PC-9 (cell line): ENCODE measurements at regions of chr12 and their contacts with region 1.

Region 1: DNA sequence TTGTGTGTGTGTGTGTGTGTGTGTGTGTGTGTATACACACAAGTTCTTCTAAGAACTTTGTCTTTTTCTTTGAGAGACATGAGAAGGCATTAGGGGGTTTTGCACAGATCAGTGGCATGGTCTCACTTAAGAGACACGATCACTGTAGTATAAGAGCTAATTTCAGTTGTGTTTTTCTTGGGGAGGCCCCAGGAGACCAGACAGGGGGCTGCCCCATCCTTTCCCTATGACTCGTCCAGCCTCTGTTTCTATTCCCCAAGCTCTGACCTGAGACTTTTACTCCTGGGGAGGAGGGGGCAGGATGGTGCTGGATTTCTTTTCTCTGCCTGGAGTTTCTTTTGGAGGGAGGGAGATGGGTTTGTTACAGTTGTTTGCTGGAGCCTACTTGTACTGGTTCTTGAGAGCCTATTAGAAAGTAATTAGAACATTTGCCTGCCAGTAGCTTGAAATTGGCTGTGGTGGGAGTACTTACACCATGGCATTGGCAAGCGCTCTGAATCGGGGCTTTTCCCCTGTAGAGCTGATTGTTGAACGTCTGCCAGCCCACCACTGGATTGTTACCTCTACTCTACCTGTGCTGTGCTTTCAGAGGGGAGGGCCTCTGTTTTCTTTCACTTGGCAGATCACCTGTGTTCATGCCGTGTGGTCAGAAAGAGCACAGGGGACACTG is 109.5 kb downstream of the TSPAN9 start:
- DNase-seq: no peak
- H3K4me3 ChIP-seq: no peak overlapping the region
- H3K27ac ChIP-seq: no peak overlapping the region
- H3K4me1 ChIP-seq: no peaks in the 10 kb centered on the region
- H3K27me3 ChIP-seq: no peaks in the 10 kb centered on the region
- CTCF ChIP-seq: no peak

Region 2: GRCh38 chr12:2853626-2854025 is 333.1 kb before region 1 on chr12:
- CTCF ChIA-PET with region 1: no interaction called
- POLR2A ChIA-PET with region 1: interaction called, 24 read pairs
- intact Hi-C with region 1: no loop called
- DNase-seq: peak in 1 of 2 experiments; percentile 79
- H3K4me3 ChIP-seq: no peak overlapping the region
- H3K27ac ChIP-seq: no peak overlapping the region
- H3K4me1 ChIP-seq: no peaks in the 10 kb centered on the region
- H3K27me3 ChIP-seq: no peaks in the 10 kb centered on the region
- CTCF ChIP-seq: peak; percentile 80

Region 3: GRCh38 chr12:3261782-3262359 is 75.2 kb after region 1 on chr12:
- CTCF ChIA-PET with region 1: no interaction called
- POLR2A ChIA-PET with region 1: no interaction called
- intact Hi-C with region 1: no loop called
- DNase-seq: no peak
- H3K4me3 ChIP-seq: no peak overlapping the region
- H3K27ac ChIP-seq: no peak overlapping the region
- H3K4me1 ChIP-seq: no peaks in the 10 kb centered on the region
- H3K27me3 ChIP-seq: peaks cover 14% of the 10 kb centered on the region; the same call in 1 of the 2 replicates
- CTCF ChIP-seq: no peak

Region 4: DNA sequence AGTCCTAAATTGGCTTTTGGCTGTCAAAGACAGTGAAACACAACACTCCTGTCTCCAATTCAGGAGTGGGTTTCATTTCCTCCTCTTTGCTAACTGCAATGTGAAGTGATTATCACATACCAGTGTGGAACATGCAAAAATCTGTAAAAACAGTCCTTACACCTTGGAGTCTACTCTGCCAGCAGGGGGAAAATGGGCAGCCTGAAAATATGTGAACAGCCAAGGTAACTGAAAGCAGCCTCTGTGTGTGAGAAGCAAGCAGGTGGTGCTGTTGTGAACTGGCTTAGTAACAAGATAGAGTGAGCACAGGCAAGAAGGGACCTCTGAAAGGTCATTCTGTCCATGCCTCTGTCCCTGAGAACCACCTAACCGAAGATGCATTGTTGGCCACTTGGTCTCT is 310.3 kb after region 1 on chr12:
- CTCF ChIA-PET with region 1: no interaction called
- POLR2A ChIA-PET with region 1: no interaction called
- intact Hi-C with region 1: no loop called
- DNase-seq: no peak
- H3K4me3 ChIP-seq: no peak overlapping the region
- H3K27ac ChIP-seq: no peak overlapping the region
- H3K4me1 ChIP-seq: no peaks in the 10 kb centered on the region
- H3K27me3 ChIP-seq: peaks cover 47% of the 10 kb centered on the region
- CTCF ChIP-seq: no peak

Region 5: GRCh38 chr12:4934407-4935035 is 1747.8 kb after region 1 on chr12:
- CTCF ChIA-PET with region 1: no interaction called
- POLR2A ChIA-PET with region 1: interaction called, 11 read pairs
- intact Hi-C with region 1: no loop called
- DNase-seq: no peak
- H3K4me3 ChIP-seq: no peak overlapping the region
- H3K27ac ChIP-seq: no peak overlapping the region
- H3K4me1 ChIP-seq: no peaks in the 10 kb centered on the region
- H3K27me3 ChIP-seq: peaks cover 61% of the 10 kb centered on the region
- CTCF ChIP-seq: no peak